ENCODE measurements at regions of chr15 and their contacts with region 1.

Region 1: DNA sequence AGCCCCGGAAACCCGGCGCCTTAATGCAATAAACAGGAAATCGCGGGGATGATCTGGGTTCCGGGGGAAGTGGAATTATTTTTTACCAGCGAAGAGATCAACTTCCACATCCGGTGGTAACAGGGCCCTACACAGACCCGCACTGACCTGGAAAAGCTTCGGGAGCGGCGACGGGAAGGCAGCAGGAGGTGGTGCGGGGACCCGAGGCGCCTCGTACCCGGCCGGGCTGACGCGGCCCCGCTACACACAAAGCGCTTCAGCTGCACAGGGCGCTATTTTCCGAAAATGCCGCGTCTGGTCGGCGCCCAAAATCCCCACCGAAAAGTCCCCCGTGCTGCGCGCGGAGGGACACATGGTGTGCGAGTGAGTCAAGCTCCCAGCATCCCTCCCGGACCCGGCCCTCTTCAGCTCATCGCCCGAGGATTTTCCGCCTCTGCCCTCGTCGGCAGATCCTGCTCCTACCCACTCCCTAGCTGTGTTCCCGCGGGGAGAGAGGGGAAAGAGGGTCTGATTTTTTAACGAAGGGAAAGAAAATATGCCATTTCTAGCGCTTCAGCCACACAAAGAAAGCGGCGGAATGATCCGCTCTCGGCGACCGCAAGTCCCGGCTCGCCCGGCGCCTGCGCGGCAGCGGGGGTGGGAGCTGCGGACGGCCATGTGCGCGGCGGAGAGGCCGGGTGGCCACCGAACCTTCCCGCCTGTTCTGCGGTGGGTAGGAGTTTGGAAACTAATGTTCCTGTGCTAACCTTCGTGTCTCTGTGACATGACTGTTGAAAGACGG is at the start of gene GABPB1:
- DNase-seq: peak; percentile 96
- total RNA-seq, gene GABPB1: 11.6 to 16.7 TPM

Region 2: GRCh38 chr15:49706805-49707204 is 648.2 kb before region 1 on chr15:
- intact Hi-C with region 1: no loop called
- DNase-seq: no peak

Region 3: GRCh38 chr15:50424066-50424890 is 69.2 kb after region 1 on chr15 and contains the start of gene USP8:
- intact Hi-C with region 1: loop called in 1 of 2 experiments (anchors 10 kb)
- DNase-seq: peak; percentile 99
- total RNA-seq, gene USP8: 53.1 to 61.0 TPM

Measured in posterior vena cava (tissue), 2 donors.